Left colon (tissue), 2 donors: ENCODE measurements at regions of chr3 and their contacts with region 1.

Region 1: GRCh38 chr3:136752422-136753325 is 496 bp upstream of the STAG1 start:
- DNase-seq: peak; percentile 96 to 100
- ATAC-seq: peak; percentile 86

Region 2: DNA sequence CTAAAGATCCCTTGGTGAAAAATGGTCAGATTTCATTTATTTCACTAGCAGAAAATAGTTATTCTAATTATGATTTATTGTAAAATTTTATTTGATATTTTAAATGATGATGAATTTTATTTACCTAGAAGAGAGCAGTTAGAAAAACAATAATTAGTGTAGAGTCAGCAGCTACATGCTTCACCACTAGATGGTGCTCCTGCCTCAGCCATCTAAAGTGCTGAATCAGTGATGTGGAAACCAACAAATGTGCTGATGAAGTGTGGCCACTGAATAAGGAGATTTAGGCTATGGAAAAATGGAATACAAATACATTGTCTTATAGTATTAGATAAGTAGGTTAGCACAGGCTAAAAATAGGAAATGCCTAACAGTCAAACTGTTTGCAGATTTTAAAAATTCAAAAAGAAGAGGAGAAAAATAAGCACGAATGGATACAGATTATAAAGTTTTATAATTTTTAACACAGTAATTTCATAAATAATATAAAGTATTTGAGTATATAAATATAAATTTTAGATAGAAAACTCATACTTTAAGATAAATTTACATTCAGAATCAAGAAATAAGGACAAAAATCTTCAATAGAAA is 677.4 kb before region 1 on chr3:
- intact Hi-C with region 1: loop called in 1 of 2 experiments (anchors 10 kb)
- DNase-seq: peak; percentile 48 to 69
- ATAC-seq: peak; percentile 86

Region 3: GRCh38 chr3:136184703-136185102 is 568.0 kb before region 1 on chr3:
- intact Hi-C with region 1: no loop called
- DNase-seq: no peak
- ATAC-seq: no peak

Region 4: GRCh38 chr3:136196401-136197158 is 556.1 kb before region 1 on chr3:
- intact Hi-C with region 1: loop called in 1 of 2 experiments (anchors 10 kb)
- DNase-seq: peak; percentile 99 to 100
- ATAC-seq: peak; percentile 77

Region 5: GRCh38 chr3:136396916-136397315 is 355.8 kb before region 1 on chr3:
- intact Hi-C with region 1: loop called in 1 of 2 experiments (anchors 10 kb)
- DNase-seq: no peak
- ATAC-seq: no peak

Region 6: DNA sequence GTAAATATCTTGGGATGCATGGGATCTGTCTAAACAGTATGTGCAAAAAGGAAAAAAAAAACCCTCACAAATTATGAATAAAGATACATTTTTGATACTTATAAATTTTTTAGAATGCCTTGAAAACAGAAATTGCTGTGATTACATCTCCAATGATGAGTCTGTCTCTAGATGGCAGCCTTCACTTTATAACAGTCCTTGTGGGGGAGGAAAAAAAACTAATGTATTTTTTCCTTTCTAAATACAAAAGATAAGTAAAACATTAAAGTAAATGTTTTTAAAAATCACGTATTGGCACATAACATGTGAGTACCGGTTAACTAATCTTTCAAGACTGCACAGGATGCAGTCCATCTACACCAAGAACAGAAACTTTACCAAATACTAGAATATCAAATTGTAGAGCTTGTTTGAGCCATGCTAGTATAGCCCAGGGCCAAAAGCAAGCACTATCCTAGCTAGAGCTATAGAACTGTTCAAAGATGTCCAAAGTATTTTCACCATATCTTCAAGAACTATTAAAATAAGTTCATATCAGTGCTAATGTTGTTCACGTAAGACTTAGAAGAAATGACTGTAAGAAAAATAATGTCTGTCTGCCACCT is 206.9 kb before region 1 on chr3:
- intact Hi-C with region 1: loop called in 1 of 2 experiments (anchors 10 kb)
- DNase-seq: no peak
- ATAC-seq: no peak

Region 7: DNA sequence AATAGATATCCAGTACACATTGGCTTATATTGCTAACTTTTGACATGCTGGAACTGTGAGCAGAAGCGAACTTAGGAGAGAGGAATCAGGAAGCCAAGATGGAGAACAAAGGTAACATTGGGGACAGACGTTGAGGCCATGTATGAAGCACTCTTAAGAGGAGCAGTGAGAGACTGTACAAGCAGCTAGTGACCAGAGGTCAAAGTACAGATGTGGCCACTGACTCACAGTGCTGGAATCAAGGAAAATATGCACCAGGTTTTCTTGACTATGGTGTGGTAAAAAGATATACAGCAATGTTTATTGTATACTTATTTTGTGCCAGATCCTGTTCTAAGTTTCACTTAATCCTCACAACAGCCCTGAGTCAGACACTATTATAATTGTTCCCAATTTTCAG is 203.1 kb after region 1 on chr3:
- intact Hi-C with region 1: no loop called
- DNase-seq: peak; percentile 28 to 77
- ATAC-seq: peak; percentile 93

Region 8: DNA sequence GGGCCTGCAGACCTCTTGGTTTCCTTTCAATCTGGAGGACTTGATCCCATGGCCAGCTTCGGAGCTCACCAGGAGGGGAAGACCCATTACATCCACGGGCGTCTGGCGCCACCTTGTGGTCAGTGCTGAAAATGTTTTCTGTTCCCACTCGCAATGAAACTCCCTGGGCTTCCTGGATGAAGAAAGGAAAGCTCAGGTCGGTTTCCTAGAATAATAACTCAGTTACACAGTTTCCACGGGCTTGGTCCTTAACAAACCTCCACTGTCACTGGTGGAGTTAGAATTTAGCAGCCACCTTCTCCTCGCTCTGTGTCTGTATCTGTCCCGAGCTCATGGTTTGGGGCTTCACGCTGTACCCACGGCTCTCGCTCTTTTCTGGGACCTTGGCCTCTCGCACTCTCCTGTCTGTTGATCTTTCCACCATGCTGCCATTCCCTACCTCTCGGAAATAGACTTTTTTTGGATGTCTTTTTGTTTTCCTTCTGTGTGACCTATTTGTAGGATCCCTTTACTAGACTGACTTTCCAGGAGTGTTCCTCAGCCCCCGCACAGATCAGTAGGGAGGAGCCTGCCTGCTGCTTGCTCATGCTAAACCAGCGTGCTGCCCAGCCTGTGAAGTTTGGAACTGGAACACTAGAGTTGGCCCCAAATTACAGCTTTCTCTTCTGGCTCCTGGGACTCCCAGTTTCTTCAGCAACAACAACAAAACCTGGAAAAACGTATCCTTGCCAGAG is 261.4 kb after region 1 on chr3:
- intact Hi-C with region 1: loop called (anchors 2 to 5 kb)
- DNase-seq: peak; percentile 83 to 90
- ATAC-seq: peak; percentile 98